Naive thymus-derived CD4-positive, alpha-beta T cell (primary cell): ENCODE measurements at regions of chr15 and their contacts with region 1.

Region 1: GRCh38 chr15:74956648-74957300 is at the start of gene RPP25:
- DNase-seq: peak; percentile 32 to 82 (median 49)
- ATAC-seq: peak; percentile 92
- H3K4me3 ChIP-seq: peak within 1 kb of the TSS; percentile 67
- H3K4me3 Mint-ChIP-seq: peak within 1 kb of the TSS; percentile 68 to 83 (median 81)
- H3K27ac ChIP-seq: peak within 1 kb of the TSS; percentile 1
- H3K27ac Mint-ChIP-seq: no peak within 1 kb of the TSS
- H3K4me1 ChIP-seq: peaks cover 17 to 23% of the 10 kb centered on the region in 2 donors
- H3K4me1 Mint-ChIP-seq: peaks cover 14 to 40% (median 31%) of the 10 kb centered on the region in 7 donors
- H3K27me3 ChIP-seq: peaks cover 9 to 10% of the 10 kb centered on the region in 2 donors
- H3K27me3 Mint-ChIP-seq: peaks cover 25 to 47% (median 27%) of the 10 kb centered on the region in 5 donors
- total RNA-seq, gene RPP25: 0.95 to 5.8 (median 3.3) TPM

Region 2: DNA sequence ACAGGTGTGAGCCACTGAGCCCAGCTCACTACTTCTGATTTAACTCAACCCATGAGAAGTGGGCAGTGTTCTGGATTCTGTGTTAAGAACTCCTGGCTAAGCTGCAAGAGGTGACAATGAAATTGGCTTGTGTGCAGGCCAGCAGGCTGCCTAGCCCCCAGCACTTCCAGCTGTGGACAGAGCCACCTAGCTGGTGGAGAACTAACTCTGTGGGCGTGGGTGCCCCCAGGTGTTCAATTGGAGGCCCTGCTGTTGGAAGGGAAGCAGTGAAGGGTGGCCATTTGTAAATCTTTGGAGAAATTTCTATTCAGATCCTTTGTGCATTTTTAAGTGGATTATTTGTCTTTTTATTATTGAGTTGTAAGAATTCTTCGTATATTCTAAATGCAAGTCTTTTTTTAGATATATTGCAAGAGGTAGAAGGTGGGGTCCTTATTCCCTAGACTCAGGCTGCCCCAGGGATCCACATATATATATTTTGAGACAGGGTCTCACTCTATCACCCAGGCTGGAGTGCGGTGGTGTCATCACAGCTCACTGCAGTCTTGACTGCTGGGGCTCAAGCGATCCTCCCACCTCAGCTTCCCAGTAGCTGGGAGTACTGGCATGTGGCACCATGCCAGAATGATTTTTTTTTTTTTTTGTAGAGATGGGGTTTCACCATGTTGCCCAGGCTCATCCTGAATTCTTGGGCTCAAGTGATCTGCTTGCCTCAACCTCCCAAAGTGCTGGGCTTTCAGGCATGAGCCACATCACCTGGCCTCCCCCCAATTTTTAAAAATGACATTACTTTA is 31.4 kb after region 1 on chr15:
- CTCF ChIA-PET with region 1: no interaction called
- POLR2A ChIA-PET with region 1: no interaction called
- intact Hi-C with region 1: loop called in 1 of 2 experiments (anchors 1 kb)
- DNase-seq: peak in 6 of 9 donors; percentile 8 to 33 (median 18)
- ATAC-seq: peak; percentile 65
- H3K4me3 ChIP-seq: no peak overlapping the region
- H3K4me3 Mint-ChIP-seq: no peak overlapping the region
- H3K27ac ChIP-seq: no peak overlapping the region
- H3K27ac Mint-ChIP-seq: no peak overlapping the region
- H3K4me1 ChIP-seq: no peaks in the 10 kb centered on the region
- H3K4me1 Mint-ChIP-seq: peaks cover 0 to 6% (median 0%) of the 10 kb centered on the region in 7 donors
- H3K27me3 ChIP-seq: no peaks in the 10 kb centered on the region
- H3K27me3 Mint-ChIP-seq: peaks cover 0 to 23% (median 5%) of the 10 kb centered on the region in 5 donors

Region 3: DNA sequence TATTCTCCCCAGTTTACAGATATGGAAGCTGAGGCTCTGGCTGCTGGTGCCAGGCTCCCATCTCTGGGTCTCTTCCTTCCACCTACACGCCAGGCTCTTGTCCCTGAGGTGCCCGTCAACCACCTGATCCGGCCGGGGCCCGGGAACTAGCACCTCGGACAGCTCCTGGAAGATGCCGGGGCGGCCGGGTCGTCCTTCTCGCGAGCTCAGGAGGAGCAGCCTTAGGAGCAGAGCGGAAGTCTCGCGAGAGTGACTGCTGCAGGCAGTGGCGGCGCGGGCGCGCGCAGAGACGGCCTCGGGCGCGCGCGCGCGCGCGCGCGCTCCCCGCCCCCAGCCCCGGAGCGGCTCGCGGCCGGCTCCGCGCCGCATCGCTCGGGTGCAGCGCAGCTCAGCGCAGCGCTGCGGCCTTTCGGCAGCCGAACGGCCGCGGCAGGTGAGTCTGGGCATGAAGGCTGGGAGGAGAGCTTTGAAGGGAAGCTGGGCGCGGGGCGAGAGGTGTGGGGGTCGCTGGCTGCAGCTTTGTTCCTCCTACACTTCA is 38.5 kb after region 1 on chr15 and contains the start of gene SCAMP5:
- CTCF ChIA-PET with region 1: interaction called, 3 read pairs
- POLR2A ChIA-PET with region 1: interaction called, 4 read pairs
- intact Hi-C with region 1: loop called in 1 of 2 experiments (anchors 1 kb)
- DNase-seq: peak; percentile 81 to 95 (median 91)
- ATAC-seq: peak; percentile 99
- H3K4me3 ChIP-seq: peak within 1 kb of the TSS; percentile 75
- H3K4me3 Mint-ChIP-seq: peak within 1 kb of the TSS; percentile 73 to 97 (median 82)
- H3K27ac ChIP-seq: no peak within 1 kb of the TSS
- H3K27ac Mint-ChIP-seq: peak within 1 kb of the TSS in 4 of 9 donors; percentile 10 to 75 (median 26)
- H3K4me1 ChIP-seq: peaks cover 8 to 9% of the 10 kb centered on the region in 2 donors
- H3K4me1 Mint-ChIP-seq: peaks cover 8 to 20% (median 15%) of the 10 kb centered on the region in 7 donors
- H3K27me3 ChIP-seq: no peaks in the 10 kb centered on the region
- H3K27me3 Mint-ChIP-seq: peaks cover 10 to 37% (median 27%) of the 10 kb centered on the region in 5 donors
- total RNA-seq, gene SCAMP5: 0.35 to 9.5 (median 0.87) TPM